ENCODE measurements at regions of chr18 and their contacts with region 1.

Region 1: DNA sequence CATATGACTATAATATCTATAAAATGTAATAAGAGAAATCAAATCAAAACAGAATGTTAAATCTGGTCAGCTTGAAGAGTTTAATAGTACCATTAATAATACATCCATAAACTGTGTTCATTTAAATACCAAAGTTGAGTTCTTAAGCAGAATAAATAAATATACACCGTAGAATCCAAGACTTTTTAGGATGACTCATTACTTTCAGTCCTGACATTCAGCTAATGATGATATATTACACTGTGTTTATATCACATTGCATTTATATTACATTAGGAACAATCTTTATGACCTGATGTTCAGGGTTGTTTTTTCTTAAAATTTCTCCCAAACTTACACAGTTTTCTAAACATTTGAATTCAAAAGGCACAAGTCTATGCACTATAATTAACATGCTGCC is 331.3 kb downstream of the SS18 start:
- DNase-seq: no peak
- ATAC-seq: no peak
- H3K4me3 Mint-ChIP-seq: no peak overlapping the region
- H3K27ac Mint-ChIP-seq: no peak overlapping the region
- H3K4me1 Mint-ChIP-seq: no peaks in the 10 kb centered on the region
- H3K27me3 Mint-ChIP-seq: peaks cover 2% of the 10 kb centered on the region

Region 2: GRCh38 chr18:25780105-25780504 is 21.0 kb after region 1 on chr18:
- CTCF ChIA-PET with region 1: interaction called, 3 read pairs
- POLR2A ChIA-PET with region 1: no interaction called
- intact Hi-C with region 1: loop called in 1 of 2 experiments (anchors 2 kb)
- DNase-seq: no peak
- ATAC-seq: no peak
- H3K4me3 Mint-ChIP-seq: no peak overlapping the region
- H3K27ac Mint-ChIP-seq: no peak overlapping the region
- H3K4me1 Mint-ChIP-seq: no peaks in the 10 kb centered on the region
- H3K27me3 Mint-ChIP-seq: no peaks in the 10 kb centered on the region